ENCODE measurements at regions of chr13 and their contacts with region 1.

Region 1: GRCh38 chr13:28204690-28205443 is 66.5 kb downstream of the PAN3 start:
- DNase-seq: no peak
- H3K4me3 Mint-ChIP-seq: peak overlapping the region; percentile 28
- H3K27ac Mint-ChIP-seq: peak overlapping the region; percentile 74
- H3K4me1 Mint-ChIP-seq: peaks cover 17% of the 10 kb centered on the region
- H3K27me3 Mint-ChIP-seq: no peaks in the 10 kb centered on the region

Region 2: DNA sequence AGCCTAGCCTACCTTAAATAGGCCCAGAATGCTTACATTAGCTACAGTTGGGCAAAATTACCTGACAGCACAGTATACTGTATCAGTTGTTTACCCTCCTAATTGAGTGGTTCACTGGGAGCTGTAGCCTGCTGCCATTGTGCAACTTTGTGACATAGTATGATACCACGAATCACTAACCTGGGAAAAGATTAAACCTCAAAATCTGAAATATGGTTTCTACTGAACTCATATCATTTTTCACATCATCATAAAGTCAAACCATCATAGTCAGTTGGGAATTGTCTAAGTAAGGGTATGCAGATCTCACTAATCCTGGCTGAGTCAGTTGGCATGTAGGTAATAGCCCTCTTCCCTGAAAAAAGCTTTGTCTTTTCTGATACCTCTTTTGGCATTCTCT is 57.4 kb before region 1 on chr13:
- intact Hi-C with region 1: loop called (anchors 1 kb)
- DNase-seq: no peak
- H3K4me3 Mint-ChIP-seq: no peak overlapping the region
- H3K27ac Mint-ChIP-seq: no peak overlapping the region
- H3K4me1 Mint-ChIP-seq: peaks cover 18% of the 10 kb centered on the region
- H3K27me3 Mint-ChIP-seq: no peaks in the 10 kb centered on the region

Measured in activated CD4-positive, alpha-beta T cell treated with anti-CD3 and anti-CD28 coated beads, Interleukin-2, amount 10 ng/mL, durations not matched to agents 24 days and 14 days (primary cell).